CD8-positive, alpha-beta T cell (primary cell): ENCODE measurements at regions of chr12 and their contacts with region 1.

Region 1: GRCh38 chr12:68250454-68250853 is 3.0 kb downstream of the IL22 start:
- DNase-seq: no peak
- ATAC-seq: no peak
- H3K4me3 ChIP-seq: no peak overlapping the region
- H3K4me3 Mint-ChIP-seq: no peak overlapping the region
- H3K27ac ChIP-seq: no peak overlapping the region
- H3K27ac Mint-ChIP-seq: no peak overlapping the region
- H3K4me1 ChIP-seq: no peaks in the 10 kb centered on the region
- H3K4me1 Mint-ChIP-seq: no peaks in the 10 kb centered on the region
- H3K27me3 ChIP-seq: no peaks in the 10 kb centered on the region
- H3K27me3 Mint-ChIP-seq: peaks cover 10% of the 10 kb centered on the region
- CTCF ChIP-seq: no peak

Region 2: GRCh38 chr12:68236421-68237059 is 13.9 kb before region 1 on chr12:
- CTCF ChIA-PET with region 1: interaction called, 14 read pairs
- POLR2A ChIA-PET with region 1: no interaction called
- intact Hi-C with region 1: no loop called
- DNase-seq: peak in 8 of 9 experiments; percentile 11 to 84 (median 36)
- ATAC-seq: peak; percentile 79
- H3K4me3 ChIP-seq: peak overlapping the region; percentile 46 to 48
- H3K4me3 Mint-ChIP-seq: peak overlapping the region; percentile 94
- H3K27ac ChIP-seq: peak overlapping the region; percentile 23 to 60
- H3K27ac Mint-ChIP-seq: peak overlapping the region; percentile 97
- H3K4me1 ChIP-seq: peaks cover 35% of the 10 kb centered on the region
- H3K4me1 Mint-ChIP-seq: peaks cover 48% of the 10 kb centered on the region
- H3K27me3 ChIP-seq: no peaks in the 10 kb centered on the region
- H3K27me3 Mint-ChIP-seq: no peaks in the 10 kb centered on the region
- CTCF ChIP-seq: no peak